Panc1 (cell line): ENCODE measurements at regions of chr14 and their contacts with region 1.

Region 1: DNA sequence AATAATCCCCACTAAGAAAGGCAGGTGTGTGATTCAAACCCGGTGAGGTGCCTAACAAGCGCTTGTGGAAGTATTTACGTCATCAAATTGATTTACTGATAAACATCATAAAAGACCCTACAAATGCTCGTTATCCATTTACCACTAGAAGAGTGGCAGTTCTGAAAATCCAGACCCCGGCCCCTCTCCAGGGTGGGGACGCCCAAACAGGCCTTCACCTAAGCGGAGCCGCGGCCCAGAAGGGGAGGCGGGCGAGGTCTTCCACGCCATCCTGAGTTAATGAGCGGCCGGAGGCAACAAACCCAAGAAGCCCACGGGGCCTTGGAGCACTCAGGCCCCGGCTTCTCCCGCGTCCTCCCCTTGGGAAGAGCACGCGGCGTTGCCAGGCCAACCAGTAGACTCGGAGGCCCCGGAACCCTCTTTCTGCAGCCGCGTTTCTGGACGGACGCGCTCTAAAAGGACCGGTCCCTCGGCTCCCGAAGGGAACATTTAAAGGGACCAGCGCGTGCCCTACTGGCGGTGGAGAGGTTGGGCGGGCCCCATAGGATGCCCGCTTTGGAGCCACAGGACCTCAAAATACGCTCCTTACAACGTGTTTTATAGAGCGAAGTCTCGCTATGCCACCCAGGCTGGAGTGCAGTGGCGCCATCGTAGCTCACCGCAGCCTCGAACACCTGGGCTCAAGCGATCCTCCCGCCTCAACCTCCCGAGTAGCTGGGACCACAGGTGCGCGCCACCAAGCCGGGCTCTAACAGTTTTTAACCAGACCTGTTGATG is 3.5 kb downstream of the PTPN21 start:
- DNase-seq: no peak
- ATAC-seq: peak; percentile 87
- H3K4me3 ChIP-seq: peak overlapping the region; percentile 60 to 72
- H3K27ac ChIP-seq: peak overlapping the region; percentile 83
- H3K4me1 ChIP-seq: peaks cover 18% of the 10 kb centered on the region
- H3K27me3 ChIP-seq: no peaks in the 10 kb centered on the region
- CTCF ChIP-seq: peak; percentile 55

Region 2: DNA sequence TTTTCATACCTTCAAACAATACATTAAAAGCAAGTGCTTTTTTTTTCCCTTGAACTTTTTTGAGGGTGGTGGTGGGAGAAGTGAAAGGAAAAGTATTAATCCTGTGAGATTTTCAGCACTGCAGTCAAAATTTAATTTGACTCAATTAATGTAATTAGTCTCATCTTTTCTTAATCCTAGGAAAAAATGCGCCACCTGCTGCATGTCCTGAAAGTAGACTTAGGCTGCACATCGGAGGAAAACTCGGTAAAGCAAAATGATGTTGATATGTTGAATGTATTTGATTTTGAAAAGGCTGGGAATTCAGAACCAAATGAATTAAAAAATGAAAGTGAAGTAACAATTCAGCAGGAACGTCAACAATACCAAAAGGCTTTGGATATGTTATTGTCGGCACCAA is 113.6 kb before region 1 on chr14:
- CTCF ChIA-PET with region 1: no interaction called
- POLR2A ChIA-PET with region 1: no interaction called
- in situ Hi-C with region 1: no loop called
- intact Hi-C with region 1: no loop called
- DNase-seq: no peak
- ATAC-seq: no peak
- H3K4me3 ChIP-seq: no peak overlapping the region
- H3K27ac ChIP-seq: no peak overlapping the region
- H3K4me1 ChIP-seq: no peaks in the 10 kb centered on the region
- H3K27me3 ChIP-seq: no peaks in the 10 kb centered on the region
- CTCF ChIP-seq: peak; percentile 52; the same call in 1 of the 2 replicates

Region 3: DNA sequence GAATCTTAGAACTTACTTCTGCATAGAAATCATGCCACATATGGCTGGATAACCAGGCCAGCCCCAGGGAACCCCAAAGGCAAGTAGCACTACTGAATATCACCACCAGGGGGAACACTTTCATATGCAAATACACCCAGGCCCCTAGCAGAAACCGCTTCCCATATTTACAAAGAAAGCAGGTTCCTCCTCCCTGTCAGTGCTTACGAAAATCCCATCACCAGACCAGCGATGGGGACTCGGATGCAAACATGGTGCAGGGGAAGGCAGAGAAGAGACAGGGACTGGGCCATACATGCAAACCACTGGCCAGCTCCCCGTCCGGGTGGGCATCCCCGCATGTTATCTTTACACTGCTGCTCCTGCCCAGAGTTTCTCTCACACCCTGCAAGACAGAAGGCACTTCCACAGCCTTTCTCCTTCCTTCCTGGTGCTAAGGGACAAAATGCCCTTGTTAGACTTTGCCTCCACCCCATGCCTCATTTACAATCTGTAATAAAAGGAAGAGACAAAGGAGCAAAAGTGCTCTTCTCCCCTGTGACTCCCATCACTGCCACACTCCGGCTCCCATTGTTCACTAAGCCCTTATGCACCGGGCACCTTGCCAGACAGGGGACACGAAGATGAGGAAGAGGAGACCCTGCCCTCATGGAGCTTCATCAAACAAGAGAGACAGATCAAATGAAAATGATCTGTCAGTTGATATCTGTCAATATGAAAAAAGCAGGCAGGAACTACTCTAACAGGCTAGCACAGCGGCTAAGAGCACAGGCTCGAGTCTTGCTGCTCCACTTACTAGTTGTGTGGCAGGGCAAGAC is 58.8 kb before region 1 on chr14:
- CTCF ChIA-PET with region 1: no interaction called
- POLR2A ChIA-PET with region 1: no interaction called
- in situ Hi-C with region 1: no loop called
- intact Hi-C with region 1: loop called (anchors 10 kb)
- DNase-seq: peak; percentile 25
- ATAC-seq: peak; percentile 92
- H3K4me3 ChIP-seq: no peak overlapping the region
- H3K27ac ChIP-seq: no peak overlapping the region
- H3K4me1 ChIP-seq: no peaks in the 10 kb centered on the region
- H3K27me3 ChIP-seq: no peaks in the 10 kb centered on the region
- CTCF ChIP-seq: peak; percentile 84

Region 4: DNA sequence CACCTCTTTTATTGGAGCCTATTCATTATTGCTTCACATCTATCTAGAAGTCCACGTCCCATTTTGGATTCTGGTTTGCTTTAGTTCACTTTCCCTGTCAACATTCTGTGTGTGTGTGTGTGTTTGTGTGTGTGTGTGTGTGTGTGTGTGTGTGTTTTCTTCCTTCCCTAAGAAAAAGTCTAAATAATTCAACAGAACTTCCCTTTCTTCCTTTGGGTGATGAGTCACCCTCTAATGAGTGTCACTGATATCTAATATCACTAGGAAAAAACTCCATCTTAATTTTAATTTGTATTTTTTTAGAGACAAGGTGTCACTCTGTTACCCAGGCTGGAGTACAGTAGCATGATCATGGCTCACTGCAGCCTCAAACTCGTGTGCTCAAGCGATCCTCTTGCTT is 507.4 kb after region 1 on chr14:
- CTCF ChIA-PET with region 1: no interaction called
- POLR2A ChIA-PET with region 1: no interaction called
- in situ Hi-C with region 1: no loop called
- intact Hi-C with region 1: no loop called
- DNase-seq: no peak
- ATAC-seq: no peak
- H3K4me3 ChIP-seq: no peak overlapping the region
- H3K27ac ChIP-seq: no peak overlapping the region
- H3K4me1 ChIP-seq: no peaks in the 10 kb centered on the region
- H3K27me3 ChIP-seq: no peaks in the 10 kb centered on the region
- CTCF ChIP-seq: no peak